Activated CD8-positive, alpha-beta T cell treated with anti-CD3 and anti-CD28 coated beads for 36 hours (primary cell): ENCODE measurements at regions of chr3 and their contacts with region 1.

Region 1: DNA sequence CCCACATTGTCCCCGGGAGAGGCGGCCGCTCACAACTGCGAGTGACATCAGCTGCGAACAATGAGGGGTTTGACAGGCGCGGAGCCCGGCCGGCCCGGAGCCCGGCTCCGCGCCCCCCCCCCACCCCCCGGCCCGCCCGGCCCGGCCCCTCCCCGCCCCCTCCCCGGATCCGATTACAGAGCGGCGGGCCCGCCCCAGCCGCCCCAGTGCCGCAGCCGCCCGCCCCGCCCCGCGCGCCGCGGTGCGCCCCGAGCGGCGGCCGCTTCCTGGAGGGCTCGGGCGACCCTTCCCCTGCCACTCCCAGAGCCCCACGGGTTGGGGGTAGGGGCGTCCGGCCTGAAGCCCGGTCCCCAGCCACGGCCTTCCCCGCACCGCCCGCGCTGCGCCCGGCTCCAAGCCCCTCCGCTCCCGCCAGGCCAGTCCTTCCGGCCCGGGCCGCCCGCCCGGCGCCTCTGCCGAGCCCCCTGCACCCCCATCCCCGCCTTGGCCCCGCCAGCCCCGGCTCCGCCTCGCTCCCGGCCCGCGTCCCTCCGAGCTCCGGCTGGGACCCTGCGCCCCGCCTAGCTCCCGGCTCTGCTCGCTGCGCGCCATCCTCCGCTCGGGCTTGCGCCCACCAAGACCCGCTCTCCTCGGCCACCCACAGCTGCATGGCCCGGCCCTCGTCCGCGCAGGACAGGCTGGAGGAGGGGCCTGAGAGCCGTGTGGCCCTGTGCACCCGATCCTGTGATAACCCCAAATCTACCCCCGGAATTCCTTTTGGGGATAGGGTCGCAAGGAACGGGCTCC is at the start of gene PCBP4:
- DNase-seq: no peak
- ATAC-seq: peak; percentile 68
- H3K4me3 Mint-ChIP-seq: peak within 1 kb of the TSS; percentile 72
- H3K27ac Mint-ChIP-seq: peak within 1 kb of the TSS; percentile 11
- H3K4me1 Mint-ChIP-seq: peaks cover 16% of the 10 kb centered on the region
- H3K27me3 Mint-ChIP-seq: no peaks in the 10 kb centered on the region
- CTCF ChIP-seq: no peak
- total RNA-seq, gene PCBP4: 8.4 to 9.6 TPM

Region 2: DNA sequence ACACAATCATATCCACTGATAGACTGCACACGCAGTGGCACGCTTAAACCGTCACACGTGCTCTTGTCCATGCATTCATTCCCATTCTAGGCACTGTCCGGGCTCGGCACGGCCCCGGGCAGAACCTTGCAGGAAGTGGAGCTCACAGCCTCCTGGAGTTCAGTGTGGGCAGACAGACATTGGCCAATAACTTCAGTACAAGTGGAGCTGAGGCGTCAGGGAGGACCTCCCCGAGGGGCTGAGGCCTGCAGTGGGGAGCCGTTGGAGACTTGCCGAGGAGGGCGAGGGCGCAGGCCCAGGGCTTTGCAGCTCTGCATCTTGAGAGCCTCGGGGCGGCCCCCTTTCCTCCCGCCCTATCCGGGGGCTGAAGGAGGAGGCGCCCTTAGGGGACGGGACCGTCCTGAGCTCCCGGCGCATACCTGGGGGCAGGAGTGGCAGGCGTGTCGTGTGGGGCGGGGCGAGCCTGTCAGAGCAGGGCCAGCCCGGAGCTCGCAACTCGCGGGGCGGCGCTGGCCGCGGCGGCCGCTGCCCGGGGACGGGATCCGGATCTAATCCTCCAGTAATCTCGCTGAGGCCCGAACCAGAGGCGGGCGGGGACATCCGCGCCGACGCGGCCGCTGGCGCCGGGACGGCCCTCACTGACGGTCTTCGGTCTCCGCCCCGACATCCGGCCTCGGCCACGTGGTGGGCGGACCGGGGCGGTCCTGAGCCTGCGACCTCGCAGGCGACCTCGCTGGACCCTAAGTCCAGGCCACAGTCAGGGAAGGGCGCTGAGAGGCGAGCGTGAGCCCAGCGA is 15.4 kb after region 1 on chr3 and contains the start of gene ACY1:
- CTCF ChIA-PET with region 1: interaction called, 40 read pairs
- POLR2A ChIA-PET with region 1: interaction called, 43 read pairs
- intact Hi-C with region 1: no loop called
- DNase-seq: peak; percentile 92
- ATAC-seq: peak; percentile 91
- H3K4me3 Mint-ChIP-seq: peak within 1 kb of the TSS; percentile 92
- H3K27ac Mint-ChIP-seq: peak within 1 kb of the TSS; percentile 95
- H3K4me1 Mint-ChIP-seq: peaks cover 21% of the 10 kb centered on the region
- H3K27me3 Mint-ChIP-seq: no peaks in the 10 kb centered on the region
- CTCF ChIP-seq: peak; percentile 60
- total RNA-seq, gene ACY1: 61.8 to 64.5 TPM

Region 3: GRCh38 chr3:51995346-51996163 is 28.0 kb after region 1 on chr3 and contains the start of gene RPL29:
- CTCF ChIA-PET with region 1: no interaction called
- POLR2A ChIA-PET with region 1: interaction called, 10 read pairs
- intact Hi-C with region 1: no loop called
- DNase-seq: peak; percentile 94
- ATAC-seq: peak; percentile 96
- H3K4me3 Mint-ChIP-seq: peak within 1 kb of the TSS; percentile 99
- H3K27ac Mint-ChIP-seq: peak within 1 kb of the TSS; percentile 100
- H3K4me1 Mint-ChIP-seq: peaks cover 33% of the 10 kb centered on the region
- H3K27me3 Mint-ChIP-seq: no peaks in the 10 kb centered on the region
- CTCF ChIP-seq: no peak
- total RNA-seq, gene RPL29: 2,039 to 2,045 TPM

Region 4: DNA sequence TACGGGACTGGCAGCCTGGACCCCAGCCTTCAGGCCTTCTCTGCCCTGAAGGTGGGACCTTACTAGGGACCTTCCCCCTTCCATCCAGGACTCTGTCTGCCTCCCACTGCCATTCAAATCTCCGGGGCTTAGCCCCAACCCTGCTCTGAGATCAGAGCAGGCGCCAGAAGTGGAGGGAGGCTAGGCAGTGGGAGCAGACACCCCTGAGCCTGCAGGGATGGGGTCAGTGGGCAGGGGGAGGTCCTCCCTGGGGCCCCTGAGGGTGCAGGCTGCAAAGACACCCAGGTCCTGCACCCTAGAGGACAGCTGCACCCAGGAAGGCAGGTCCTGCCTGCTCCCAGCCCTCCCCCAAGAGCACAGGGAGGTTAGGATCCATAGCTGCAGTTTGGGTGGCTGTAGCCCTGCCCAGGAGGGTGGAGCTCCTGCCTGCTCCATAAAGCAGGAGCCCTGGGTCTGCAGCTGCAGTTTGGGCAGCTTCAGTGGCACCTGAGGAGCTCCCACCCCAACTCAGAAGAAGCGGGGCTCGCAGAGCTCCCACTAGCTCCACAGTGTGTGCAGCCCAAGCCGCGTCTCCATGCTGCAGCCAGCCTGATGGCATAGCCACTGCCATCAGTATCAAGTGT is 194.8 kb after region 1 on chr3:
- CTCF ChIA-PET with region 1: no interaction called
- POLR2A ChIA-PET with region 1: no interaction called
- intact Hi-C with region 1: no loop called
- DNase-seq: no peak
- ATAC-seq: no peak
- H3K4me3 Mint-ChIP-seq: no peak overlapping the region
- H3K27ac Mint-ChIP-seq: no peak overlapping the region
- H3K4me1 Mint-ChIP-seq: no peaks in the 10 kb centered on the region
- H3K27me3 Mint-ChIP-seq: no peaks in the 10 kb centered on the region
- CTCF ChIP-seq: no peak